ENCODE measurements at regions of chr5 and their contacts with region 1.

Region 1: GRCh38 chr5:145903113-145903512 is 30.3 kb upstream of the GRXCR2 start:
- DNase-seq: peak; percentile 18 to 30
- ATAC-seq: peak; percentile 69 to 87
- H3K4me3 ChIP-seq: no peak overlapping the region
- H3K27ac ChIP-seq: peak overlapping the region in 1 of 2 experiments; percentile 12; a peak in 1 of 6 replicates
- H3K4me1 ChIP-seq: peaks cover 8% of the 10 kb centered on the region; the same call in 1 of the 3 replicates
- CTCF ChIP-seq: no peak
- EP300 ChIP-seq: no peak
- POLR2A ChIP-seq: no peak
- RAD21 ChIP-seq: peak in 1 of 2 experiments; percentile 12; a peak in 1 of 5 replicates

Region 2: GRCh38 chr5:145660897-145661640 is 242.0 kb before region 1 on chr5:
- CTCF ChIA-PET with region 1: no interaction called
- POLR2A ChIA-PET with region 1: no interaction called
- DNase-seq: no peak
- ATAC-seq: no peak
- H3K4me3 ChIP-seq: no peak overlapping the region
- H3K27ac ChIP-seq: no peak overlapping the region
- H3K4me1 ChIP-seq: no peaks in the 10 kb centered on the region
- CTCF ChIP-seq: no peak
- EP300 ChIP-seq: no peak
- POLR2A ChIP-seq: no peak
- RAD21 ChIP-seq: no peak

Region 3: DNA sequence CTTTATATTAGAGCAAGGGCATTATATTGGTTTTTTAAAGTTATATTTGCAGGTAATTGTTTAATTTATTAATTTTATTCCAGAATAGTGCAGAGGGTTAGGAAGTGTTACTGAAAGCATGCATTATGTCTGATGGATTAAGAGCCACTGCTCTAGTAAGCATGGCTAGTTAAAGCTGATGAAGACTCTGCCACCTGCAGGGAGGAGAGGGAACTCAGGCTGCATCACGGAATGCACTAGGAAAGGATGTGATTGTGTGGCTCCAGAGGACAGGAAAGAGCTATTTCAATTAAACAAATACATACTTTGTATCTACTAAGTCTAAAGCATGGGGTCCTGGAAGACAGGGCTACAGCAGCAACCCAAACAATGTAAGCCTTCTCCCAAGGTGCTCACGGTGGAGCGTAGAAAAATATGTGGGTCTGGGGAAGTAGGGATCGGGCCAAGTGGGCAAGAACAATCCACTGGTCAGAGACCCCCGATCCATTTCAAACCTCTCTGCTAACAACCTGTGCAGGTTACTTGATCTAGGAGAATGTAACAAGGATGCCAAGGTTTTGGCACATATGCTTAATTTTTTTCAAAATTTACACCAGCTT is 15.0 kb before region 1 on chr5:
- CTCF ChIA-PET with region 1: interaction called, 14 read pairs
- POLR2A ChIA-PET with region 1: no interaction called
- DNase-seq: peak; percentile 40 to 53
- ATAC-seq: peak; percentile 97 to 98
- H3K4me3 ChIP-seq: no peak overlapping the region
- H3K27ac ChIP-seq: no peak overlapping the region
- H3K4me1 ChIP-seq: no peaks in the 10 kb centered on the region
- CTCF ChIP-seq: peak; percentile 54
- EP300 ChIP-seq: no peak
- POLR2A ChIP-seq: no peak
- RAD21 ChIP-seq: peak; percentile 47 to 62; a peak in 4 of 5 replicates